Sciatic nerve (tissue), 2 donors: ENCODE measurements at regions of chr6 and their contacts with region 1.

Region 1: DNA sequence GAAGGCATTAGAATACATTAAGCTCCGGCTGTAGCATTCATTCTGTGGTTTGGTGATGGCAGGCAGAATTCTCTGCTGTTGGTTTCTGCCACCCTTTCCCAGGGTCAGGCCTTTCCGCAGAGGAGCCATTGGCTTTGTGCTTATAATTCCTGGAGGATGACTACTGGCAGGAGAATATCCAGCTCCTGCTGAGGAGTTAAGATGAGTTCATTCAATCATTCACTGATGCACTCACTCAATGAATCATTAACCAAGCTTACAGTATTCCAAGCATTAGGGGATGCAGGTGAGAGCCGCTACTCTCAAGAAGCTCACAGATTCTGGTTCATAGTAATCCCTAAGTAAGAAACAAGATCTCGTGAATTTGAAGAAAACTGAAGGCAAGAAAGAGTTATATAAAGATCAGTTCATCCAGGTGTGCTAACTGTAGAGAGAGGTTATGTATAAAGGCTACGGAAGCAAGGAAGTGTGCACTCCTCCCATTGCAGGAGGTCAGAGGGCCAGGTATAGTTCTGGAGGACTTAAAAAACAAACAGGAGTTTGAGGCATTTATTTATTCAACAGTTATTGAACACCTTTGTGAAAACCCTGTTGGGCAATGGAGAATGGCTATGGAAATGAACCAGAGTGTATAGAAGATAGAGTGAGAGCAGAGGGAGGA is 75.5 kb downstream of the HMGN3 start:
- DNase-seq: no peak
- ATAC-seq: no peak

Region 2: GRCh38 chr6:79127660-79128059 is 31.3 kb before region 1 on chr6:
- intact Hi-C with region 1: no loop called
- DNase-seq: no peak
- ATAC-seq: no peak

Region 3: GRCh38 chr6:79146421-79146820 is 12.6 kb before region 1 on chr6:
- intact Hi-C with region 1: loop called (anchors 1 kb)
- DNase-seq: no peak
- ATAC-seq: no peak